A673 (cell line): ENCODE measurements at regions of chr2 and their contacts with region 1.

Region 1: DNA sequence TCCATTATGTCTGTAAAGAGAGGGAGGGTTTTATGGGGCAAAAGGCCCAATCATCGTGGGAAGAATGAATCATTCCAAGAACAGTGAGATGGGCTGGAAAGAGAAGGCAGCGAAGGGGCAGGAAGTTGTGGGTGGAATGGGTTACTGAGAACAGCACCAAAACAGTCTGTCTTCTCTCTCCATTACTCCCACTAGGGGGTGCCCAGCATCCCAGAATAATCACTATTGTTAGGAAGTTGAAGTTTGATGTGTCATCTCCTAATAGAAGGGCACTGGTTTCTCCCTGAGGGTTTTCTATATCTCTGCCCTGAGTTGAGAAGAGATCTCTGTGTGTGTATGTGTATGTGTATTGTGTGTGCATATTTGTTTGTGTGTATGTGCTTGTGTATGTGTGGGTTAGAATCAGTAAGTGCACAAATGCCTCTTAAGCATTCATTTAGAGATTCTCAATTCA is 76.6 kb upstream of the MAP4K3 start:
- DNase-seq: peak; percentile 98
- H3K4me3 ChIP-seq: no peak overlapping the region
- H3K27ac ChIP-seq: peak overlapping the region; percentile 65
- H3K4me1 ChIP-seq: peaks cover 71% of the 10 kb centered on the region
- H3K27me3 ChIP-seq: no peaks in the 10 kb centered on the region
- CTCF ChIP-seq: peak; percentile 68

Region 2: DNA sequence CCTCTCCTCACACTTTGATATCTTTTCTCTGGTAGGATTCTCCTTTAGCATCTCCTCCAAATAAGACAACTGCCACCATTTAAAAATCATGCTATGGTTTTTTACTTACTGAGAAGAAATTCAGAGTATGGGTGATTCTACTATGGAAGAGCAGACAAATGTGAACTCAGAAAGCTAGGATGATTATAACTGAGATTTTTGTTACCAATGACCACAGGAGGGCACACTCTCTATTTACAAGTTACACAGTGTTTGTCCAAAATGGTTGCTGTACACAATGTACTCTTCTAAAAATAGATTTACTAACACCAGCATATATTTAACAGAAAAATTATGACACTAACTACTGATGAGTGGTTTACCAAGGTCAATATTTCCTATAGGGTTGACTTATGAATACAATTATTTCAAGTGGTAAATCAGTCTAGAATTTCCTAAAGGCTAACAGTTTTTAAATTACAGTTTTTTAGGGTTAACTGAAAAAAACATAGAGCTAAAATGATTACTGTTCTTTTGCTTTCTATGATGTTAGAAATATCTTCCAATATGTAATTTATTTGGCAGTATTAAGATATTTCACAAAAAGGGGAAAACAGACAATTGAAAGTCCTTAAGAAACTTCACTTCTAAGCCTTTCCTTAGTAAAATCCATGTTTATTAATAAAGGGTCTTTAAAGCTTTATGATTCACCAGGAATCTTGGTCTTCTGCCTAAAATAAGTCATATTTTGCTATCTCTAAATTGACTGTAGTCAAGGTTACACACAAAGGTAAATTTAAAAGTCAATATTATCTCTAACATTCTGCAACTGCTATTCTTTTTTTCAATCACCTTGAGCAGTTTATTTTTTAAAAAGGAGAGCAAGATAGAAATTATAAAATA is 133.8 kb before region 1 on chr2:
- CTCF ChIA-PET with region 1: interaction called, 5 read pairs
- POLR2A ChIA-PET with region 1: no interaction called
- intact Hi-C with region 1: loop called (anchors 5 kb)
- DNase-seq: peak; percentile 63
- H3K4me3 ChIP-seq: no peak overlapping the region
- H3K27ac ChIP-seq: no peak overlapping the region
- H3K4me1 ChIP-seq: peaks cover 17% of the 10 kb centered on the region
- H3K27me3 ChIP-seq: no peaks in the 10 kb centered on the region
- CTCF ChIP-seq: peak; percentile 72

Region 3: GRCh38 chr2:39696838-39697237 is 183.2 kb after region 1 on chr2:
- CTCF ChIA-PET with region 1: interaction called, 11 read pairs
- POLR2A ChIA-PET with region 1: interaction called, 3 read pairs
- intact Hi-C with region 1: loop called (anchors 1 kb)
- DNase-seq: peak; percentile 79
- H3K4me3 ChIP-seq: no peak overlapping the region
- H3K27ac ChIP-seq: no peak overlapping the region
- H3K4me1 ChIP-seq: peaks cover 10% of the 10 kb centered on the region
- H3K27me3 ChIP-seq: no peaks in the 10 kb centered on the region
- CTCF ChIP-seq: peak; percentile 56

Region 4: DNA sequence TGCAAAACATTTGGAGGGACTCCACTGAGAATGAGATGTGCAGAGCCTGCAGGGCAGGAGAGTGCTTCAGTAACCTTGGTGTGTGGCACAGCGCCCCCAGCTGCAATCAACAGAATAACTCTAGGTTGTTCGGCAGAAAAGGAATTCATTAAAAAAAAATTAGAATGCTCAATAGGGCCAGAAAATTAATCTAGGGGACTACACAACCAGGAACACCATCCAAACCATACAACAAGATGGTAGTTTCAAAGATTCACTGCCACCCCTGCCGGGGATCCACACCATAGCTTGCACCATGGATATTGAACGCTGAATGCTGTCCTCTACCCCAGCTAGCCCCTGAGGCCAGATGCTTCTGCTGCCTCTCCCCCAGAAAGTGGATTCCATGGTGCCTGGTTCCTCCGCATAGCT is 215.3 kb after region 1 on chr2:
- CTCF ChIA-PET with region 1: interaction called, 5 read pairs
- POLR2A ChIA-PET with region 1: no interaction called
- intact Hi-C with region 1: loop called (anchors 1 kb)
- DNase-seq: peak; percentile 65
- H3K4me3 ChIP-seq: no peak overlapping the region
- H3K27ac ChIP-seq: no peak overlapping the region
- H3K4me1 ChIP-seq: peaks cover 27% of the 10 kb centered on the region
- H3K27me3 ChIP-seq: no peaks in the 10 kb centered on the region
- CTCF ChIP-seq: peak; percentile 95

Region 5: GRCh38 chr2:39837856-39838453 is 324.3 kb after region 1 on chr2:
- CTCF ChIA-PET with region 1: no interaction called
- POLR2A ChIA-PET with region 1: no interaction called
- intact Hi-C with region 1: loop called (anchors 10 kb)
- DNase-seq: peak; percentile 57
- H3K4me3 ChIP-seq: no peak overlapping the region
- H3K27ac ChIP-seq: no peak overlapping the region
- H3K4me1 ChIP-seq: no peaks in the 10 kb centered on the region
- H3K27me3 ChIP-seq: no peaks in the 10 kb centered on the region
- CTCF ChIP-seq: peak; percentile 81

Region 6: DNA sequence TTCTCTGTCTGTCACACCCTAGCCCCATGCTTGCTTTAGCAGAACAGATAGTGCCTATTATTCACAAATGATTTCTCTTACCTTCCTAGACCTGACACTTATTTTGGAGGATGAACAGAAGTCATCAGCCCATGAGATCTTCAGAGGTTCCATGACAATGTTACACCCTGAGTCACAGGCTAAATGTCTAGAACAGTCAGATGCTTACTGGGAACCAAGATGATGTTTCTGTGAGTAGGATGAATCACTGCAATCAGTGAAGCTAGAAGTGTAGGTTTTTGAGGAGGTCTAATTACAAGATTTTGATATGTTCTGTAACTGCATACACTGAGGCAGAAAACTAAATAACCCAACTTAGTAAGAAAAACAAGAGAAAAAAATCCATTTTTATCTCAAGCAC is 388.4 kb after region 1 on chr2:
- CTCF ChIA-PET with region 1: no interaction called
- POLR2A ChIA-PET with region 1: no interaction called
- intact Hi-C with region 1: loop called (anchors 10 kb)
- DNase-seq: no peak
- H3K4me3 ChIP-seq: no peak overlapping the region
- H3K27ac ChIP-seq: no peak overlapping the region
- H3K4me1 ChIP-seq: no peaks in the 10 kb centered on the region
- H3K27me3 ChIP-seq: peaks cover 48% of the 10 kb centered on the region
- CTCF ChIP-seq: no peak